Posterior cingulate gyrus (tissue), 11 donors: ENCODE measurements at regions of chr7 and their contacts with region 1.

Region 1: DNA sequence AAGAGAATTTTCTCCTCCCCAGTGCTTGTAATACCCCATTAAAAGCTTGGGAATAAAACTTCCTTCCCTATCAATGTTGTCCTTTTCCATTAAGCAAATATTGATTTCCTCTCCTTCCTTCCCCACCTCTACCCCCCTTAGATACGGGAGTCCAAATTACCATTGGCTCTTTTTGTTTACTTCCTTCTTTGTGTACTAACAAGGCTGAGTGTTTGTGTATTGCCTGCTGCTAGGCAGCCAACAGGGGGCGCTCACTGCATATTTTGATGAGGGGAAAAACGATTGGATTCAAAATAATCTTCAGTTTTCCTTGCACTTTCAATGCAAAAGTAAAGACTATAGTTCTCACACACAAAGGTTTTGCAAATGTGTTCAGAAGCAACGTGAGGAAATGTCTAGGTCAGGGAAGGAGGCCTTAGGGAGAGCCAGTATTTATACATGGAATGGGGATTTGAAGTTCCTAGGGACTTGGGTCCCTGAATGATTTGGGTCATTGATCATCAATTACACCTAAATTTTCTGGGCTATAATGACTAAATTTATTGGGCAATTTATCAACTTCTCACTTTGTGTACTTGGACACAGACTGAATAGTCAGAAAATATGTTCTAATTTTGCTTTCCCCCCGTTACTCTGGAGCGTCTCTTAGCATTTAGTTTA is 23.6 kb upstream of the VPS41 start:
- DNase-seq: peak; percentile 34 to 92 (median 71)

Region 2: GRCh38 chr7:38748056-38748611 is 184.5 kb before region 1 on chr7:
- intact Hi-C with region 1: no loop called
- DNase-seq: peak in 4 of 10 donors; percentile 10 to 71 (median 12)

Region 3: GRCh38 chr7:39464350-39465054 is 531.9 kb after region 1 on chr7:
- intact Hi-C with region 1: loop called (anchors 5 kb)
- DNase-seq: no peak

Region 4: DNA sequence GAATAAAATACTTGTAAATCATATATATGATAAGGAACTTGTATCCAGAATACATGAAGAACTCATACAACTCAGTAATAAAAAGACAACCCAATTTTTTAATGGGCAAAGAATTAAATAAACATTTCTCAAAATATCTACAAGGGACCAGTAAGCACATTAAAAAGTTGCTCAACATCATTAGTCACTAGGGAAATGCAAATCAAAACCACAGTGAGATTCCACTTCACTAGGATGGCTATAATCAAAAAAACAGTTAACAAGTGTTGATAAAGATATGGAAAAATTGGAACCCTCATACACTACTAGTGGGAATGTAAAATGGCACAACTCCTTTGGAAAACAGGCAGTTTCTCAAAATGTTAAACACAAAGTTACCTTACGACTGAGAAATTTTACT is 593.3 kb after region 1 on chr7:
- intact Hi-C with region 1: loop called (anchors 2 kb)
- DNase-seq: no peak